Activated CD8-positive, alpha-beta memory T cell treated with anti-CD3 and anti-CD28 coated beads, Interleukin-2, amount 10 ng/mL, durations not matched to agents 7 days and 5 days (primary cell): ENCODE measurements at regions of chr11 and their contacts with region 1.

Region 1: GRCh38 chr11:44538375-44539054 is 26.9 kb upstream of the CD82 start:
- DNase-seq: peak; percentile 76
- ATAC-seq: peak; percentile 89
- H3K4me3 Mint-ChIP-seq: no peak overlapping the region
- H3K27ac Mint-ChIP-seq: no peak overlapping the region
- H3K4me1 Mint-ChIP-seq: peaks cover 1% of the 10 kb centered on the region
- H3K27me3 Mint-ChIP-seq: peaks cover 5% of the 10 kb centered on the region

Region 2: DNA sequence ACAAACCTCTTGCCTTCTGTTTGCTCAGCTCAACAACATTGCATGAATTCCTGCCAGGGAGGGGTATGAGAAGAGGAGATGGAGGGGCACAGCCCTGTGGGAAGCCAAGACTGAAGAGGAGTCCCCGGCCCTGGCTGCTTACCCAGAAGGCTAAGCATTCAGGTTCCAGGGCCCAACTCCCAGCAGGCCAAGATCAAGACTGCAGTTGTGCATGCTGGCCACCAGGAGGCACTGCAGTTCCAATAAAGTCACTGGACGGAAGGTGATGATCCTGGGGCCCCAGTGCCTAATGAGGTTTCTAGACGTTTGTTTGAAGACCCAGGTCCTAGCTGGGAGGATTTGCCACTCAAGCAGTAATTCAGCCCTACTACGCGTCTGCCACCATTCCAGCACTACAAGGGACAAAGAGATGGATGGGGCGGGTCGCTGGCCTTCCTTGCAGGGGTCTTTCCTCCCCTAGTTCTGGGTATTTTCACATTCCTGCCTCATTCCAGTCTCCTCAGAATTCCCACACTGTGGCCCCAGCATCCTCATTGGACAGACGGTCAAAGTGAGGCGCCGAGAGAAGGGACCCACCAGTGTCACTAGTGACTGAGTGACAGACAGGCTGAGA is 252.1 kb before region 1 on chr11:
- CTCF ChIA-PET with region 1: interaction called, 17 read pairs
- DNase-seq: peak; percentile 70
- ATAC-seq: peak; percentile 71
- H3K4me3 Mint-ChIP-seq: no peak overlapping the region
- H3K27ac Mint-ChIP-seq: no peak overlapping the region
- H3K4me1 Mint-ChIP-seq: no peaks in the 10 kb centered on the region
- H3K27me3 Mint-ChIP-seq: peaks cover 3% of the 10 kb centered on the region

Region 3: DNA sequence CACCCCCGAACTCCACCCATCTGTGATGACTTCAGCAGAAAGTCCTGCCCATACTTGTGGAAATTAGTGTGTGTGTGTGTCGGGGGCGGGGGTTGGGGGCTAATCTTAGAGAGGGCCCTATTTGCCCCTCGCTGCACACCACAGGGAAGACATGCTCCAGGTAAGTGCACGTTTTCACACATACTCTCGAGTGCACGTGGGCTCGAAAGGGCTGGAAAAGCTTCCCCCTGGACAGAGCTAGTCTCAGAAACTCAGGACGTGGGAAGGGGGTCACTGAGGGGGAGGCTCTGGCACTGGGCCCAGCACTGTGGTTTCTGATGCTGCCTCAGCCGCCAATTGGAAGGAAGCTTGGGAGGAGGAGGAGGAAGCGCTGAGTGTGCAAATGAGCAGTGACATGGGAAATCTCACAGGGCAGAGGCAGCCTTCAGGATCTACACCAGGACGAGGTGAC is 13.7 kb before region 1 on chr11:
- CTCF ChIA-PET with region 1: interaction called, 106 read pairs
- DNase-seq: no peak
- ATAC-seq: no peak
- H3K4me3 Mint-ChIP-seq: no peak overlapping the region
- H3K27ac Mint-ChIP-seq: no peak overlapping the region
- H3K4me1 Mint-ChIP-seq: peaks cover 25% of the 10 kb centered on the region
- H3K27me3 Mint-ChIP-seq: peaks cover 28% of the 10 kb centered on the region

Region 4: GRCh38 chr11:44556735-44557409 is 18.4 kb after region 1 on chr11:
- CTCF ChIA-PET with region 1: interaction called, 15 read pairs
- DNase-seq: peak; percentile 80
- ATAC-seq: peak; percentile 65
- H3K4me3 Mint-ChIP-seq: no peak overlapping the region
- H3K27ac Mint-ChIP-seq: no peak overlapping the region
- H3K4me1 Mint-ChIP-seq: peaks cover 26% of the 10 kb centered on the region
- H3K27me3 Mint-ChIP-seq: no peaks in the 10 kb centered on the region